Activated CD4-positive, alpha-beta T cell treated with anti-CD3 and anti-CD28 coated beads, Interleukin-2, amount 10 ng/mL, durations not matched to agents 24 days and 14 days (primary cell): ENCODE measurements at regions of chr1 and their contacts with region 1.

Region 1: GRCh38 chr1:87513255-87513654 is 184.6 kb downstream of the LMO4 start:
- DNase-seq: no peak
- H3K4me3 Mint-ChIP-seq: no peak overlapping the region
- H3K27ac Mint-ChIP-seq: no peak overlapping the region
- H3K4me1 Mint-ChIP-seq: no peaks in the 10 kb centered on the region
- H3K27me3 Mint-ChIP-seq: peaks cover 10% of the 10 kb centered on the region

Region 2: DNA sequence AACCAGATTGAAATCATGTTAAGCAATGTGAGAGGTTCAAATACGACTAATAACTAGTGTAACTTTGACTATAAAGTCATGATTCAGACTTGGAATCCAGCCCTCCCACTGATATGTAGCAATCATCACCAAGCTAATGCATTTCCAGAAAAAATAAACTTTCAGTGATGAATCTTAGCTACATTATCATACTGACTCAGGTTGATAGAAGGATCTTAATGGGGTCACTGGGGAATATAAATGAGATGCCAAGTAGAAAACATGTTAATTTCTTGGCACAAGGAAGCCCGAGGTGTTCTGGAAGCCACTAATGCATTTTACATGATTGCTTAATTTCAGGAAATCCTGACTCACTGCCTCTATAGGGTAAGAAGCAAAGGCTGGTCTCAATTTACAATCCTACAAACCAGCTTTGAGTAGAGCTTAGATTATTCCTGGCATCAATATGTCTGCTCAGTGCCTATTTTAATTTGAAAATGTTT is 667.0 kb before region 1 on chr1:
- intact Hi-C with region 1: loop called (anchors 10 kb)
- DNase-seq: no peak
- H3K4me3 Mint-ChIP-seq: no peak overlapping the region
- H3K27ac Mint-ChIP-seq: no peak overlapping the region
- H3K4me1 Mint-ChIP-seq: no peaks in the 10 kb centered on the region
- H3K27me3 Mint-ChIP-seq: peaks cover 1% of the 10 kb centered on the region